Ascending aorta (tissue), 2 donors: ENCODE measurements at regions of chr19 and their contacts with region 1.

Region 1: DNA sequence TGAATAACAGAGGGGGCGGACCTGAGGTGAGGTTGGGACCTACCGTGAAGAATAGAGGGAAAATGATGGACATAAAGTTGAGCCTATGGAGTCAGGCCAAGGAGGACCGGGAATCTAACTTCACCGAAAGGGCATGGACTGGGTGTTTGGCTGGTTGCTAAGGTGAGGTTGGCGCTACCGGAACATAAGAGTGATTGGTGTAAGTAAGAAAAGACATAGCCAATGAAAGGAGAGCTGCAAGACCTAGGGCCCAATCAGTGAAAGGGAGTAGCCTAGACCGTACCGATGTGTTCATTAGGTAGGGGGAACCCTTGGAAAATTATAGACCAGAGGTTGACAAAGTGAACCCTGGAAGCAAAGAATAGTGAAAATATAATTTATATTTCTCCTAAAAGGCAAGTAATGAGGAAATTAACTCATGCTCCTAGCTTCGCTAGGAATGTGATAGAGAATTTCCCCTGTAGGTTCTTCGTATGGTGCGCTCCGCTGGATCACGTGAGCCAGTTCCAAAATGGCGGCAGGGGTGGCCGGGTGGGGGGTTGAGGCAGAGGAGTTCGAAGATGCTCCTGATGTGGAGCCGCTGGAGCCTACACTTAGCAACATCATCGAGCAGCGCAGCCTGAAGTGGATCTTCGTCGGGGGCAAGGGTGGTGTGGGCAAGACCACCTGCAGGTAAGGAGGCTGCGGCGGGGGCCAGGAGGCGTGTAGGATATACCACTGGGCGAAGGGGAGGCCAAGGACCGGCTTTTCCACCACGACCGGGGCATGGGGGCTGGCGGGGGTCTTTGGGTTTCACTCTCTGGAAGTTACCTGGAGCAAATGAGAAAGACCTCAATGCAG is at the start of gene GET3:
- DNase-seq: peak; percentile 93 to 98
- H3K4me3 ChIP-seq: peak within 1 kb of the TSS; percentile 70 to 80
- H3K27ac ChIP-seq: peak within 1 kb of the TSS; percentile 78 to 90
- H3K4me1 ChIP-seq: peaks cover 20 to 28% of the 10 kb centered on the region in 2 donors
- H3K27me3 ChIP-seq: no peaks in the 10 kb centered on the region
- CTCF ChIP-seq: peak in 2 of 3 experiments; percentile 5 to 15
- total RNA-seq, gene GET3: 43.6 TPM

Region 2: GRCh38 chr19:12681074-12681951 is 55.9 kb before region 1 on chr19 and contains the start of gene DHPS:
- intact Hi-C with region 1: loop called (anchors 5 kb)
- DNase-seq: peak; percentile 54 to 97
- H3K4me3 ChIP-seq: peak within 1 kb of the TSS; percentile 82 to 99
- H3K27ac ChIP-seq: peak within 1 kb of the TSS; percentile 93 to 98
- H3K4me1 ChIP-seq: peaks cover 0 to 9% of the 10 kb centered on the region in 2 donors
- H3K27me3 ChIP-seq: no peaks in the 10 kb centered on the region
- CTCF ChIP-seq: no peak
- total RNA-seq, gene DHPS: 160 TPM

Region 3: DNA sequence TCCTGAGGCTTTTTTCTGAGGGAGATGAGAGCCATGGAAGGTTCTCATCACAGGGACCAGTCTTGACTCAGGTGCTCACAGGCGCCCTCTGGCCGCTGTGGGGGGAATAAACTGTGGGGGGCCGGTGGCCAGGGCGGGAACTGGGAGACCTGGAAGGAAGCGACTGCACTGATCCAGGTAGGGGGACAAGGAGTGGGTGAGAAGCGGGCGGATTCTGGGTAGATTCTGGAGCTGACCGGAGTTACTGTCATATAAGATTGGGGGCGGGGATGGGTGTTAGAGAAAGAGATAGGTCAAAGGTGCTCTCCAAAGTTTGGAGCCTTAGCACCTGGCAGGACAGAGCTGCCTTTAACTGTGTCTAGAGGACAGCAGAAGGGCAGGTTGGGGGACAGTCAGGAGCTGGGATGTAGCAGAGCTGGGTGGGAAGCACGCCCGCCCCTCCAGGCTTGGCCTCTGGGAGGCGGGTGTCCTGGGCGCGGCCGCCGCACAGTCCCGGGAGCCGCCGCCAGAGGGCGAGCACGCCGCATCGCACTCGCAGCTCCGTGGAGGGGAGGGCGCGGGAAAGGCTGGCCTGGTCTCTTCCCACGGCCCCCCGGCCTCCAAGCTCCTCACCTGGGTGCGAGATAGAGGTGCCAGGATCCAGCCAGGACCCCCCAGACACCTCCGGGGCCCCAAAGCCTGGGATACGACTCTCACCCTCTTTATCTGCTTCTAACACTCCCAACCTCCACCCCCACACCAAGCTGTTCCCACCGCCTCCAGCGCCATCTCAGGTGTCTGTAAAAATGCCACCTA is 228.0 kb after region 1 on chr19:
- intact Hi-C with region 1: no loop called
- DNase-seq: peak in 1 of 2 donors; percentile 90
- H3K4me3 ChIP-seq: peak overlapping the region; percentile 56 to 73
- H3K27ac ChIP-seq: peak overlapping the region; percentile 12 to 71
- H3K4me1 ChIP-seq: peaks cover 0 to 4% of the 10 kb centered on the region in 2 donors
- H3K27me3 ChIP-seq: no peaks in the 10 kb centered on the region
- CTCF ChIP-seq: peak; percentile 72 to 95 (median 87)